ENCODE measurements at regions of chr5 and their contacts with region 1.

Region 1: DNA sequence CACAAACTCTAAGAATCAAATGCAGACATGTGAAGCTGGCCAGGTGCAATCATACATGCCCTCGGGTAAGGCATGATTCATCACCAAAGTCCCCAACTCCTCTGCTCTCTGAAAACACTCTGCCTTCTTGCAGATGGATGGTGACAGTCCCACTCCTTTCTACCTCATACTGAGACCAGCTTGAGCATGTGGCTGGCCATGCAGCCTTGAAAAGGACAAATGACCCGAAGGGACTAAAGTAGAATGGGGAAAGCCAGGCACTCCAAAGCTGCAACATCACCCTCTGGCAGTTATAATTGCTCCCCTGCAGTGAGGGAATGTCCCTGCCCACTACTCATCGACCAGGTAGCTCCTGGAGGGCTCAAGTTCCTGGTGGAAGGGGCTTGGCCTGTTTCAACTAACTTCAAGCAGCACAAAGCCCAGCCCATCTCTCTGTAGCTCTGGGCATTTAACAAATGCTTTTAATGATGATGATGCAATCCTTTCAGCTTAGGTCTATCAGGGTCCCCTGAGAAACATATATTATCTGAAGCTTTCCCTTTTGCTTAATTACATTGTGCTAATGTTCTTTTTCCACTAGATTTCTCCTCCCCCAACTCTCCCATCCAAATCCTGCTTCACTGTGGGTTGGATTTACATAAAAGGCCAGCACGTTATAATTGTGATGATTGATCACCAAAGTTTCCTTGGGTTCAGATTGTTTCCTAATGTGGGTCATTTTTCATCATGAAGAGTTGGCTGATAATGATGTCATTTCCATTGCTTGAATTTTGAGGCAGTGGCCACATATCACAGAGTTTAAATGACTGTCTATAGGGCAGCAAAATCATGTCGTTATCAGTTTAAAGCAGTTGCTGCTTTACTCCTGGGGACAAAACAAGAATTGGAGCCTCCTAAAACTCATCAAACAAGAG is 436.5 kb upstream of the SLC30A5 start:
- DNase-seq: no peak
- ATAC-seq: no peak
- H3K4me3 ChIP-seq: no peak overlapping the region
- H3K27ac ChIP-seq: no peak overlapping the region
- H3K4me1 ChIP-seq: no peaks in the 10 kb centered on the region
- H3K27me3 ChIP-seq: no peaks in the 10 kb centered on the region
- CTCF ChIP-seq: no peak

Region 2: DNA sequence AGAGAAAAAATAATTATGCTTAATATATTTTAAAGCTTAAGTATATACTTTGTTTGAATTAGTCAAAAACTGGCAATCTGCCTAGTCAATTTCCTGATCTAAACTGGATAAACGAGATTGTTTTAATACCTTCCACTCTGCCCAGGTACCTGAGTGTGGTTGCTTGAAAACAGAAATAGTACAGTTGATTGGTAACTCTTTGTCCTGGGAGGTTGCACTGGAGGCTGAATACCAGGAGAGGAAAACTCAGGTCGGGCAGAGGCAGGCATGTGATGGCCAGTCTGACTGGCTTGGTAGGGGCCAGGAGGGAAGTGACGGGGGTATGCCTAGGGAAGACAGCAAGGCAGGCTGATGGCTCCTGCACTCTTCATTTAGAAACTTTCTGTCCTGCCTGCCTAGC is 361.5 kb before region 1 on chr5:
- intact Hi-C with region 1: loop called in 1 of 2 experiments (anchors 5 kb)
- DNase-seq: peak in 3 of 4 donors; percentile 27 to 73 (median 56)
- ATAC-seq: peak; percentile 92
- H3K4me3 ChIP-seq: no peak overlapping the region
- H3K27ac ChIP-seq: peak overlapping the region in 1 of 2 donors; percentile 14
- H3K4me1 ChIP-seq: peaks cover 4 to 20% of the 10 kb centered on the region in 2 donors
- H3K27me3 ChIP-seq: no peaks in the 10 kb centered on the region
- CTCF ChIP-seq: no peak

Region 3: DNA sequence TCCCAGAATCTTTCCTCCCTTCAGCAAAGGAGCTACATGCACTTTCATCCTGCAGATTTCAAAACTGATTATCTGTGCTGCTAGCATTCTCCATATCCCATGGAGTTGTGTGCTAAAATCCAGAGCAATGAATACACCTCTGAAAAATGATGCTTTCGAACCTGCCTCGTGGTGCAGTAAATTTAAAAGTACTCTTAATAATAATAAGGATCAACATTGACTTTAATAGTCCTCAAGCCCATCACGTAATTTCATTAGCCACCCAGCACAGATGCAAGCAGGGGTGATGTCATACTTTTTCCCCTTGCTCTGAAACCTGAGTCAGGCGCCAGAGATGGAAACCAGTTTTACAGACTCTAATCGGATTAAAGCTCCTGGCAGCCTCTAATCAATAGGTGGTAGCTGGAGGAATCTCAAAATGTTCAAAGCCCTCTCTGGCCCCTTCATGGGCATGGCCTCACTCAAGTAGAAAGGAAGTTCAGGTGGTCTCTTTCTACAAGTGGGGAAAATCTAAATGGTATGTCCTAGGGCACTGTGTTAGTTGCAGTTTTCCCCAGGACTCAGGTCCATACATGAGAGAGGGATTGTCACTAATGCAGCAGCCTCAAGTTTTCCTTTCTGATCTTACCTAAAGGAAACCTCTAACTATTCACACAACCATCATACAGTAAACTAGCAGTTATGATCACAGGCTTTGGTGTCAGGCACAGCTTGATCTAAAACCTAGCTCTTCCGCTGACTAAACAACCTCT is 215.0 kb after region 1 on chr5:
- intact Hi-C with region 1: no loop called
- DNase-seq: no peak
- ATAC-seq: no peak
- H3K4me3 ChIP-seq: no peak overlapping the region
- H3K27ac ChIP-seq: no peak overlapping the region
- H3K4me1 ChIP-seq: no peaks in the 10 kb centered on the region
- H3K27me3 ChIP-seq: no peaks in the 10 kb centered on the region
- CTCF ChIP-seq: no peak

Measured in left lung (tissue), 14 donors.